ENCODE measurements at regions of chr9 and their contacts with region 1.

Region 1: DNA sequence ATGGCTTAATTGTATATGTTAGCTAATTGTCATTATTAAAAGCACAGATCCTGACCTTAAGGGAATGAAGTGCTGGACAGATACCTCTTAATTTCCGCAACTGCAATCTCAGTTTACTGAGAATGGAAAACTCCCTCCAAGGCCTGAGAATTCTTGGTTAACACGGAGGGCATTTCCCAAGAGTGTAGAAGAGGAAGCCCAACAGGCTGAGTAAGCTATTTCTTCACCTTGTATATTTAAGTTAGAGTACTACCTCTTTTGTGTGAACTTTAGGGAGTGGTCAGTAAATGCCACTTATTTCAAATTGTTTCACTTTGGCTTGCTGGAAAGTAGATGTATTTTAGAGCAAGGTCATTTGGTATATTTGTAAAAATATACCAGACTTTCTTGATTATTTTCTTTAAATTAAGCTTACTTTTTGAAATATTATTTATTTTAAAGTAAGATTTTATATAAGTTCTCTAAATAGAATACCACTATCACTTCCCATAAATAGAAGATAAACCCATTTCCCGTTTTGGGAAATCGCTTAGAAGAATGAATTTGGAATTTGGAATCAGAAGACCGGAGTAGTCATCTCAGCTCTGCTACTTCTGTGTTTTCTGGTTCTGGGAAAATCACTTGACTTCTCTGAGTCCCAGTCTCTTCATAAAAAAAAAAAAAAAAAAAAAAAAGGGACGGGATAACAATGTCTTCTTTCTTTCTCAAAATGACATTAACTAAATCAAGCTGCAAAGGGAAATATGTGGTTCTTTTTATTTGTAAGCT is 26.0 kb upstream of the C9orf72 start:
- DNase-seq: peak; percentile 88 to 97 (median 96)
- H3K4me3 ChIP-seq: peak overlapping the region in 1 of 3 experiments; percentile 50
- H3K4me3 Mint-ChIP-seq: peak overlapping the region; percentile 61 to 77
- H3K27ac ChIP-seq: peak overlapping the region; percentile 87 to 95
- H3K27ac Mint-ChIP-seq: peak overlapping the region; percentile 96 to 99 (median 98)
- H3K4me1 ChIP-seq: peaks cover 48 to 51% of the 10 kb centered on the region in 2 donors
- H3K4me1 Mint-ChIP-seq: peaks cover 53% of the 10 kb centered on the region
- H3K27me3 ChIP-seq: no peaks in the 10 kb centered on the region
- H3K27me3 Mint-ChIP-seq: no peaks in the 10 kb centered on the region
- CTCF ChIP-seq: no peak

Region 2: DNA sequence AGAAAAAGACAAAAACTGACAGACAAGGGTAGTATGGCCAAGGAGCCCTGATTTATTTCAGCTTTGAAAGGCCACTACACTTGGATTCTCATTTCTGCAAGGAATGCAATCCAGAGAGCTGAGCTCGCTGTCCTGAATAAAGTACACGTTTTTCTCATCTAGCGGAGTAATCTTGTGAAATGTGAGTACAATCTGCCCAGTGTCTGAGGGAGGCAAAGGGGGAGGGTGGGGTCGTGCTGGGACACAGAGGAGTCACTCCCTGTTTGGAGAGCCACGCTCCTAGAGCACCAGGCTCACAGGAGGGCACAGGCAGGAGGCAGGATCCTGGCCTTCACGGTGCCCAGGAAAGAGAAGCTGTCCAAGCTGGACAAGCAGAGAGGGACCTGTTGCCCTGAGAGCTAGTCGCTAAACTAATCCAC is 126.2 kb before region 1 on chr9:
- intact Hi-C with region 1: no loop called
- DNase-seq: no peak
- H3K4me3 ChIP-seq: no peak overlapping the region
- H3K4me3 Mint-ChIP-seq: no peak overlapping the region
- H3K27ac ChIP-seq: no peak overlapping the region
- H3K27ac Mint-ChIP-seq: no peak overlapping the region
- H3K4me1 ChIP-seq: peaks cover 8 to 10% of the 10 kb centered on the region in 2 donors
- H3K4me1 Mint-ChIP-seq: peaks cover 19% of the 10 kb centered on the region
- H3K27me3 ChIP-seq: no peaks in the 10 kb centered on the region
- H3K27me3 Mint-ChIP-seq: peaks cover 0 to 4% (median 0%) of the 10 kb centered on the region in 3 donors
- CTCF ChIP-seq: no peak

Region 3: DNA sequence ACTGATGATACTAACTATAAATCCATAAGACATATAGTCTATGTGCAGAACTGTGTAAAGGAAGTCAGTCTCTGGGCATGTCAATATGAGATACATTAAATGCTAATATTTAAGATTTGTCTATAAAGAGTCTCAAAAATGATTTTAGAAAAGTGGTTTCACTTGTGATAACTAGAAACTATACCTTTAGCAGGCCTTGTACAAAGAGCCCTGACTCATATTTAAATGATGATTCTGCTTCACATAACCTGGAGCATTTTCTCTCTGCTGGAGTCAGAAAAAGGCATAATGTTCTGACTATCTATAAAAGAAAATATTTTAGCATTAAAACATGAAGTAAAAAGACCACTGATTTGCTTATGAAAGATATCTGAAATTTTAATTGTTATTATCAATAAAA is 41.0 kb before region 1 on chr9:
- intact Hi-C with region 1: no loop called
- DNase-seq: no peak
- H3K4me3 ChIP-seq: no peak overlapping the region
- H3K4me3 Mint-ChIP-seq: no peak overlapping the region
- H3K27ac ChIP-seq: peak overlapping the region in 1 of 2 donors; percentile 45
- H3K27ac Mint-ChIP-seq: no peak overlapping the region
- H3K4me1 ChIP-seq: peaks cover 8 to 10% of the 10 kb centered on the region in 2 donors
- H3K4me1 Mint-ChIP-seq: peaks cover 12% of the 10 kb centered on the region
- H3K27me3 ChIP-seq: no peaks in the 10 kb centered on the region
- H3K27me3 Mint-ChIP-seq: no peaks in the 10 kb centered on the region
- CTCF ChIP-seq: no peak

Region 4: GRCh38 chr9:27569406-27569805 is 29.9 kb before region 1 on chr9:
- intact Hi-C with region 1: no loop called
- DNase-seq: no peak
- H3K4me3 ChIP-seq: peak overlapping the region in 1 of 3 experiments; percentile 78
- H3K4me3 Mint-ChIP-seq: no peak overlapping the region
- H3K27ac ChIP-seq: peak overlapping the region in 1 of 2 donors; percentile 33
- H3K27ac Mint-ChIP-seq: no peak overlapping the region
- H3K4me1 ChIP-seq: peaks cover 71 to 85% of the 10 kb centered on the region in 2 donors
- H3K4me1 Mint-ChIP-seq: peaks cover 67% of the 10 kb centered on the region
- H3K27me3 ChIP-seq: no peaks in the 10 kb centered on the region
- H3K27me3 Mint-ChIP-seq: peaks cover 0 to 4% (median 1%) of the 10 kb centered on the region in 3 donors
- CTCF ChIP-seq: no peak

Region 5: DNA sequence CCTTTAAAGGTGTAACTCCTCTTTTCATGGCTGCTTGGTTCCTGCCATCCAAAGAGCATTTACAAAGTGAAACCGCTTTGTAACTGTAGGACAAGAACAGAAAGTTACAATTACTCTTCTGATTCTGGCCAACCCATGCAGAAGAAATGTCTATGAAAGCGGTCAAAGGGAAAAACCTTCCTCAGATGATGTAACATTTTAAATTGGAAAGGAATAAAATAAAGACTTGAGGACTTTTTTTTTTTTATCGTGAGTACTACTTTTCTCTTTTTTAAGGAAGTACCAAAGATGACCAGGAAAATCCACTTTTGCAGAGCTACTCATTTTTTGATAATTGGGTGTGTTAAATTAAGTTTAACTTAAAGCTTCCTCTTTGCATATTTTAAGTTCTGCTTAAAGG is 13.0 kb before region 1 on chr9:
- intact Hi-C with region 1: loop called in 1 of 2 experiments (anchors 1 kb)
- DNase-seq: peak in 2 of 3 donors; percentile 56 to 69
- H3K4me3 ChIP-seq: peak overlapping the region; percentile 28 to 75 (median 75)
- H3K4me3 Mint-ChIP-seq: peak overlapping the region; percentile 48 to 71
- H3K27ac ChIP-seq: peak overlapping the region; percentile 2 to 92
- H3K27ac Mint-ChIP-seq: peak overlapping the region; percentile 88 to 96 (median 90)
- H3K4me1 ChIP-seq: peaks cover 67 to 74% of the 10 kb centered on the region in 2 donors
- H3K4me1 Mint-ChIP-seq: peaks cover 69% of the 10 kb centered on the region
- H3K27me3 ChIP-seq: no peaks in the 10 kb centered on the region
- H3K27me3 Mint-ChIP-seq: no peaks in the 10 kb centered on the region
- CTCF ChIP-seq: no peak